Heart left ventricle (tissue), 16 donors: ENCODE measurements at regions of chr6 and their contacts with region 1.

Region 1: GRCh38 chr6:24589334-24589733 is 56.7 kb downstream of the KIAA0319 start:
- DNase-seq: no peak
- ATAC-seq: no peak
- H3K4me3 ChIP-seq: no peak overlapping the region
- H3K27ac ChIP-seq: no peak overlapping the region
- H3K4me1 ChIP-seq: peaks cover 0 to 3% (median 0%) of the 10 kb centered on the region in 12 donors
- H3K27me3 ChIP-seq: no peaks in the 10 kb centered on the region
- CTCF ChIP-seq: no peak
- POLR2A ChIP-seq: no peak

Region 2: DNA sequence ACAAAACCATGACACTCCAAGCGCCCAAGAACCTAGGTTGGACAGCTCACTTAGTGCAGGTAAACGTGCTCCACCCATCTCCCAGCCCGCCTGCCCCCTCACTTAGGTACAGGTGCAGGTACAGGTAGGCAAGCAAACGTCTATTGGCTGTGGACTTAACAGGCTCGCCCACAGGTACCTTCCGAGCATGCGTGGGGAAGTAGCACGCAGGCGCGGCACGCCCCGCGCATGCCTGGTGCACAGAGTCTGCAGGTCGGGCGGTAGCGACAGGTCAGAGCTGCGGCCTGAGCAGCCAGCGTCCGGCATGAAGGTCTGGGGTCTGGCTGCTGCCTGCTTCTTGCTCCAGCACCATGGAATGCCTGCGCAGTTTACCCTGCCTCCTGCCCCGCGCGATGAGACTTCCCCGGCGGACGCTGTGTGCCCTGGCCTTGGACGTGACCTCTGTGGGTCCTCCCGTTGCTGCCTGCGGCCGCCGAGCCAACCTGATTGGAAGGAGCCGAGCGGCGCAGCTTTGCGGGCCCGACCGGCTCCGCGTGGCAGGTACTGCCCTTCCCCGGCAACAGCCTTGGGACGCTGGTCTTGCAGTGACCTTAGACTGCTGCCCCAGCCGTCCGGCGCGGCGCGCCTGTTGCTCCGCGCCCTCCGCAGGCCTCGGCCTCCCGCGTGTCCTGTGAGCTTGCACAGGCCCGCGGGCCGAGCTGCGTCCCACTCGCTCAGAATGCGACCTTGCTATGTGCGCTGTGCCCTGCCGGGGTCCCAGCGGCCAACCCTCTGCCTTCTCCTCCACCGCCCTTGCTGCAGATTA is 186.4 kb before region 1 on chr6 and contains the start of gene MRS2:
- intact Hi-C with region 1: no loop called
- DNase-seq: peak; percentile 82 to 92 (median 90)
- ATAC-seq: peak; percentile 97 to 99 (median 99)
- H3K4me3 ChIP-seq: peak within 1 kb of the TSS; percentile 66 to 100 (median 84)
- H3K27ac ChIP-seq: peak within 1 kb of the TSS; percentile 70 to 94 (median 88)
- H3K4me1 ChIP-seq: peaks cover 0 to 27% (median 15%) of the 10 kb centered on the region in 12 donors
- H3K27me3 ChIP-seq: peaks cover 0 to 20% (median 8%) of the 10 kb centered on the region in 9 donors
- CTCF ChIP-seq: no peak
- POLR2A ChIP-seq: peak; percentile 78 to 84
- total RNA-seq, gene MRS2: 31.5 to 61.3 (median 45.4) TPM

Region 3: GRCh38 chr6:25078141-25078540 is 488.8 kb after region 1 on chr6:
- intact Hi-C with region 1: loop called in 4 of 10 experiments (anchors 5 kb)
- DNase-seq: no peak
- ATAC-seq: no peak
- H3K4me3 ChIP-seq: no peak overlapping the region
- H3K27ac ChIP-seq: no peak overlapping the region
- H3K4me1 ChIP-seq: peaks cover 0 to 6% (median 0%) of the 10 kb centered on the region in 12 donors
- H3K27me3 ChIP-seq: no peaks in the 10 kb centered on the region
- CTCF ChIP-seq: no peak
- POLR2A ChIP-seq: no peak

Region 4: GRCh38 chr6:25354078-25354932 is 765.0 kb after region 1 on chr6:
- intact Hi-C with region 1: no loop called
- DNase-seq: no peak
- ATAC-seq: peak in 2 of 4 donors; percentile 22 to 47
- H3K4me3 ChIP-seq: no peak overlapping the region
- H3K27ac ChIP-seq: peak overlapping the region in 2 of 12 donors; percentile 13 to 27
- H3K4me1 ChIP-seq: peaks cover 0 to 38% (median 3%) of the 10 kb centered on the region in 12 donors
- H3K27me3 ChIP-seq: no peaks in the 10 kb centered on the region
- CTCF ChIP-seq: no peak
- POLR2A ChIP-seq: no peak